ENCODE measurements at regions of chr11 and their contacts with region 1.

Region 1: DNA sequence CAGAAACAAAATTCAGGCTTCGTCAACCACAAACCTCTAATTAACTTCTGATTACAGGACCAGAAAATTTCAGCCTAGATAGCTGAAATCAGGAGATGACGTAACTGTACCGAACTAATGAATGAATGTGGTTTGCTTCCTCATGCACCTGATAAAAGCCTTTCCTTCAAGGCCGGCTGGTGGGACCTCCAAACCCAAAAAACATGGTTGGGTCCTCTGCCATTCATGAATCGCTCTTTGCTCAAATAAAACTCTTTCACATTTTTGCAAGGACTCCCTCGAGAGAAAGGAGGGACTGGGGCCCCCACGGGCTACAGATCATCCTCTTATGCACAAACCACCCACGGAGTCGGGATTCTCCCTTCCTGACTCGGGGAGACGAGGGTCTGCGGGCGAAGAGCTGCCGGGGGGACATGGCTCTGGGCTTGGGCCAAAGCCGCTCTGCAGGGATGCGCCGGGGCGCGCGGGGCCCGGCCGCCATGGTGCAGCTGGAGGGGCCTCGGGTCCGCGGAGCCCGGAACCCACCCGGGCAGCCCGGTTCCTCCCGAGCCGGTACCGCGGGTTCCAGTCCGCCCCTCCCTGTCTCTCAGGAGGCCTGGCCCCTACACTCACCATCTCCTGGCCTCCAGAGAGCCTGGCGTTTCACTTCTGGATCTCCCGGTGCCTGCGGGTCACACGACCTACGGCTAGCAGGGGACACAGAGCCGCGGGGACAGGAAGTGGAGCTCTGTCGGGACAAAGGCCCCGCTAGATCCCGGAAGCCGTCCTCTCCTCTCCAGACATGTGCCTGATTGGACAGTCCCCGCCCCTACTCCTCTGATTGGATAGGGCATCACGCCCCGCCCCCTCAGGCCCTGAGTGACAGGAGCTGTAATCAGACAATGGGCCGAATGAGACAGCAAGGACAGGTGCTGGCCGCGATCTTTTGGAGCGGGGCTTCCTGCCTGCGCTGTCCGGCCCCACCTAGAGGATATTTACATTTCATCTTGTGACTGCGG is at the start of gene ZNF195:
- DNase-seq: peak; percentile 99 to 100
- H3K4me3 ChIP-seq: peak within 1 kb of the TSS; percentile 93
- H3K4me3 Mint-ChIP-seq: peak within 1 kb of the TSS; percentile 98
- H3K27ac Mint-ChIP-seq: peak within 1 kb of the TSS; percentile 99
- H3K4me1 ChIP-seq: peaks cover 16% of the 10 kb centered on the region
- H3K4me1 Mint-ChIP-seq: peaks cover 7% of the 10 kb centered on the region
- H3K27me3 ChIP-seq: no peaks in the 10 kb centered on the region
- H3K27me3 Mint-ChIP-seq: no peaks in the 10 kb centered on the region
- CTCF ChIP-seq: no peak
- total RNA-seq, gene ZNF195: 51.2 and 57.5 TPM in 2 replicates

Region 2: GRCh38 chr11:3353066-3353465 is 25.7 kb before region 1 on chr11:
- CTCF ChIA-PET with region 1: no interaction called
- POLR2A ChIA-PET with region 1: no interaction called
- intact Hi-C with region 1: no loop called
- DNase-seq: no peak
- H3K4me3 ChIP-seq: no peak overlapping the region
- H3K4me3 Mint-ChIP-seq: no peak overlapping the region
- H3K27ac Mint-ChIP-seq: no peak overlapping the region
- H3K4me1 ChIP-seq: no peaks in the 10 kb centered on the region
- H3K4me1 Mint-ChIP-seq: no peaks in the 10 kb centered on the region
- H3K27me3 ChIP-seq: no peaks in the 10 kb centered on the region
- H3K27me3 Mint-ChIP-seq: no peaks in the 10 kb centered on the region
- CTCF ChIP-seq: no peak

Region 3: DNA sequence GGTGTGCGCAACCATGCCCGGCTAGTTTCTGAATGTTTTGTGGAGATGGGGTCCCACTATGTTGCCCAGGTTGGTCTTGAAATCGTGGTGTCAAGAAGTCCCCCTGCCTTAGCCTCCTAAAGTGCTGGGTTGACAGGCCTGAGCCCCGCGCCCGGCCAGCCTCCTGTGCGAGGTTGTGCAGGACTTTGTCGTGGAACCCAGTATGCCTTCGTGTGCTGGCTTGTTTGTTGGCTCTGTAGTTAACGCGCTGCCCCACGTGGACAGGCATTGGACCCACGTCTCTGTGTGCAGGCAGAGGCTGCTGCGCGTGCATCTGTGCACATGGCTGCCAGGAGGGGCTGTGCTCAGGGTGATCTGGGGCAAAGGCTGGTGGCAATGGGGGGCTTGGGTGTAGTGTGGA is 34.1 kb after region 1 on chr11:
- CTCF ChIA-PET with region 1: interaction called, 19 read pairs
- POLR2A ChIA-PET with region 1: interaction called, 8 read pairs
- intact Hi-C with region 1: no loop called
- DNase-seq: no peak
- H3K4me3 ChIP-seq: no peak overlapping the region
- H3K4me3 Mint-ChIP-seq: no peak overlapping the region
- H3K27ac Mint-ChIP-seq: no peak overlapping the region
- H3K4me1 ChIP-seq: no peaks in the 10 kb centered on the region
- H3K4me1 Mint-ChIP-seq: peaks cover 12% of the 10 kb centered on the region
- H3K27me3 ChIP-seq: no peaks in the 10 kb centered on the region
- H3K27me3 Mint-ChIP-seq: peaks cover 3% of the 10 kb centered on the region
- CTCF ChIP-seq: no peak

Measured in Caco-2 (cell line).